HEK293 (cell line): ENCODE measurements at regions of chr17 and their contacts with region 1.

Region 1: DNA sequence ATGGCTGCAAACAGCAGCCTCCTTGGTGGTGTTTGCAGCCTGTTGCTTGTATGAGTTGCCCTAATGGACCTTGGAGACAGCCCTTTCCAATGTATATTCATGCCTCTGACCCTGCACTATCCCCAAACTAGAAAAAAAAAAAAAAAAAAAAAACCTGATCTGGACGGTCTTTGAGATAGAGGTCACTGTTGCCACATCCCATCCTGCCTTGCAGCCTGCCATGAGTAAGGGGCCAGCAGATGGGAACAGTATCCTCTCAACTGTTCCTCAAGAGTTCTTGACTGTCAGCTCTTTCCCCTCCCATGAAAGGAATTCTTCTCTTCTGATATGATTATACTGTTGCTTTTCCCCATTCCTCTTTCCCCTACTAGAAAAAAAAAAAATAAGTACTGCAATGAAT is 152.4 kb downstream of the SSH2 start:
- H3K4me3 ChIP-seq: no peak overlapping the region
- H3K27ac ChIP-seq: no peak overlapping the region
- H3K4me1 ChIP-seq: no peaks in the 10 kb centered on the region
- CTCF ChIP-seq: no peak

Region 2: GRCh38 chr17:28937044-28937729 is 840.5 kb before region 1 on chr17:
- CTCF ChIA-PET with region 1: no interaction called
- POLR2A ChIA-PET with region 1: interaction called, 10 read pairs
- H3K4me3 ChIP-seq: no peak overlapping the region
- H3K27ac ChIP-seq: peak overlapping the region; percentile 24; the same call in 1 of the 2 replicates
- H3K4me1 ChIP-seq: peaks cover 43% of the 10 kb centered on the region
- CTCF ChIP-seq: no peak

Region 3: GRCh38 chr17:29617125-29617480 is 160.6 kb before region 1 on chr17:
- CTCF ChIA-PET with region 1: interaction called, 11 read pairs
- POLR2A ChIA-PET with region 1: interaction called, 7 read pairs
- H3K4me3 ChIP-seq: no peak overlapping the region
- H3K27ac ChIP-seq: no peak overlapping the region
- H3K4me1 ChIP-seq: peaks cover 12% of the 10 kb centered on the region
- CTCF ChIP-seq: peak; percentile 33; the same call in 1 of the 2 replicates

Region 4: DNA sequence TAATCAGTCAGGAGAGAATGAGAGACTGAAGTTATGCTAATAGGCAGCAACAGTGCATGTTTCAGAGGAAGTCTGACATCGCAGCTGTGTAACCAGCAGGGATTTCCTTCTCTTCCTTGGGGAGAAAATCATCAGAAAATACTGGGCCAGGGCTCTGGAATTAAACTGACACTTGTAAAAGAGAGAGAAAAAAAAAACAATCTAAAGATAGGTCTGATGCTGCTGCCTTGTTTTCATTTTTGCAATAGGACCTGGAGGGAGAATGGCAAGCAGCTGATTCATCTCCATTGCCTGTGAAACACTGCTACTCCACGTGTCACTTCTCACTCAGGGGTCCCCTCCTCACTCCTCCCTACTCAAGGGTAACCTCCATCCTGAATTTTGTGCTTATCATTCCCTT is 137.2 kb before region 1 on chr17:
- CTCF ChIA-PET with region 1: interaction called, 161 read pairs
- POLR2A ChIA-PET with region 1: interaction called, 7 read pairs
- H3K4me3 ChIP-seq: no peak overlapping the region
- H3K27ac ChIP-seq: no peak overlapping the region
- H3K4me1 ChIP-seq: peaks cover 35% of the 10 kb centered on the region
- CTCF ChIP-seq: no peak

Region 5: GRCh38 chr17:29645515-29646051 is 132.1 kb before region 1 on chr17:
- CTCF ChIA-PET with region 1: interaction called, 161 read pairs
- POLR2A ChIA-PET with region 1: no interaction called
- H3K4me3 ChIP-seq: no peak overlapping the region
- H3K27ac ChIP-seq: no peak overlapping the region
- H3K4me1 ChIP-seq: peaks cover 28% of the 10 kb centered on the region
- CTCF ChIP-seq: no peak

Region 6: DNA sequence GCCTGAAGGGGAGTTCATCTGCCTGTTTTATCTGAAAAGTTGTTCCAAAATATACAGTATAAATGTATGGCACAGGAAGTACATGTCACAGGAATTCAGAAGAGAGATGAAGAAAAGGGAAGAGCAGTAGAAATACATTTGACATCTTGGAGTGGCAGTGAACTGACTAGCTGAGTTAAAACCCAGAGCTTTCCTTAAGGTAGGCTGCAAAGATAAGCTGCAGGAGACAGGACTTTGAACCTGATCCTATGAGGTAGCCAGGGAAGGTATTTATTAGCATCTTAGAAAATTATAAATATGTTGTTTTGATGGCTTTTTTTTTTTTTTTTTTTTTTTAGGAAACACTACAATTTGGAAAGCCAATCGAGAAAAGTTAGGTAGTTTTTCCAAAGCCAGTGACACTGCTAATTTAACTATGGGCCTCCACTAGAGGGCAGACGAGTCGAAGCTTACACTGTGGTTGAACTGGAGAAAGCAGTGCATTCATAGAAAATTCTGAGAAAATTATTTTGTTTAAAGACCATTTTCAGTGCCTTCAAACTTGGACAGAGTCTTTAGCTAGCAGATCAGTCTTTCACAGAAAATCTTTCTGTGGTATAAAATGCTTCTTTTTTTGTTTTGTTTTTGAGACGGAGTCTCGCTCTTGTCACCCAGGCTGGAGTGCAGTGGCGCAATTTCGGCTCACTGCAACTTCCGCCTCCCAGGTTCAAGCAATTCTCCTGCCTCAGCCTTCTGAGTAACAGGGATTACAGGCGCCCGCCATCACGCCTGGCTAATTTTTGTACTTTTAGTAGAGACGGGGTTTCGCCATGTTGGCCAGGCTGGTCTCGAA is 30.1 kb after region 1 on chr17:
- CTCF ChIA-PET with region 1: interaction called, 16 read pairs
- POLR2A ChIA-PET with region 1: no interaction called
- H3K4me3 ChIP-seq: no peak overlapping the region
- H3K27ac ChIP-seq: no peak overlapping the region
- H3K4me1 ChIP-seq: no peaks in the 10 kb centered on the region
- CTCF ChIP-seq: peak; percentile 23; the same call in 1 of the 2 replicates